ENCODE measurements at regions of chr9 and their contacts with region 1.

Region 1: DNA sequence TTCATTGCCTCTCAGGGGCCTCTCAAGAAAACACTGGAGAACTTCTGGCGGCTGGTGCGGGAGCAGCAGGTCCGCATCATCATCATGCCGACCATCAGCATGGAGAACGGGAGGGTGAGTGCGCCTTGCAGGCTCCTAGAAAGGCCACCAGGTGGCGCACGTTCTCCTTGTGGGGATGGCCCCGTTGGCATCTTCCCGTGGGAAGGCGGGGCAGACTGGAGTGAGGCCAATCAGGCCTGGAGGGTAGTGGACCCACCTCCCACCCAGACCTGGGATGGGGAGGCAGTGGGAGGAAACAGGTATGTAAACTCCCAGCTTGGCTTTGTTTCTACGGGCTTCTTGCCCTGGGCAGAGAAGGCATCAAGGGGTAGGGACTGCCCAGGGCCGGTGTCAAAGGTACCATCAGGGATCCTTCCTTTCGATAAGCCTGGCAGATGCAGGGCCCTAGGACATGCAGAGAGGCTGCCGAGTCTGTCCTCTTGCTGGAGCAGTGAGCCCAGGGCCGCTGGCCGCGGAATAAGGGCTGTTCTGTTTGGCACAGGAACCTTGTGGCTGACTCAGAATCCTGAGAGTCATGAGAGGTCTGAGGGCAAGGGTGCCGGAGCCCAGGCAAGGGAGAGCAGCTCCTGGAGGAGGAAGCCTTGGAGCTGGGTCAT is 18.9 kb upstream of the SPTLC1 start:
- DNase-seq: peak; percentile 78 to 92 (median 87)
- H3K4me3 ChIP-seq: peak overlapping the region; percentile 8
- H3K27ac ChIP-seq: peak overlapping the region; percentile 30 to 36
- H3K4me1 ChIP-seq: peaks cover 8% of the 10 kb centered on the region
- H3K27me3 ChIP-seq: no peaks in the 10 kb centered on the region
- CTCF ChIP-seq: peak; percentile 72 to 88 (median 83)
- EP300 ChIP-seq: no peak
- POLR2A ChIP-seq: no peak

Region 2: GRCh38 chr9:92115071-92115858 is 18.8 kb before region 1 on chr9 and contains the start of gene SPTLC1:
- intact Hi-C with region 1: no loop called
- DNase-seq: peak; percentile 92 to 97 (median 95)
- H3K4me3 ChIP-seq: peak within 1 kb of the TSS; percentile 69
- H3K27ac ChIP-seq: peak within 1 kb of the TSS; percentile 45 to 76
- H3K4me1 ChIP-seq: no peaks in the 10 kb centered on the region
- H3K27me3 ChIP-seq: no peaks in the 10 kb centered on the region
- CTCF ChIP-seq: no peak
- EP300 ChIP-seq: peak; percentile 32
- POLR2A ChIP-seq: peak; percentile 82
- total RNA-seq, gene SPTLC1: 60.1 to 80.2 (median 72.0) TPM

Region 3: DNA sequence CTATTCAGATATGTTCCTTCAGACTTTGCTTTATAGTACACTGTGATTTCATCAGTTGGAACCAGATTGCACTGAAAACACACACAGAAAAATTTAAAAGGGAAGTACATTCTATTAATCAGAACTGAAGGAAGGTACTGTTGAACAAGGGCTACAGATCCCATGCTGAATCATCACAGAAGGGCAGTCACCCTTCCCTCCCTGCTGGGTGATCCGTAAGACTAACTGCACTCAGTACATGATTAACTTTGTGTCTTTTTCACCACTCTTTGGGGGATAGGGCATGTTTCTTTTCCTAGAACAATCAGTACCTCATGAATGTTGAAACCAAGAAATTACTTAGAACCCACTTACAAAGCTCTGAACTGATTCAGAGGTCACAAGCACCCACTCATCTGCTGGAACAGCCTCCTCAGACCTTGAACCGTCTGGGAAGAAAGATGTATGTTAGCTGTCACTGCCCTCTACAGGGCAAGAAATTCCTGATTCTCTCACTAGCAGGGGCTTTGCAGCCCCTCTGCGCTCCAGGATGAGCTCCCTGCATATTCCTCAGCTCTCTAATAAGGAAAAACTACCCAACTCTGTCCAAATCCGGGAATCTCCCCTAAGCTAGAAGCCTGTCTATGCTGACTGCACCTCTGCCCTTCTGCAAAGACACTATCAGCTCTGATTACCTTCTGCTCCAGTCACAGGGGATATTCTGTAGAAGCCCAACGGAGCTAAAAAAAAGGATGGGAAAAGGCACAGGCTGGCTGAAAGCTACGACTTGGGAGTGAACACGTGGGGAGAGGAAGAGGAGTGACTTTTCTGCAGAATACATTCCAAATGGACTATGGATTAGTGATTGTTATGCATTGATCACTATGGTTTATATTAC is 108.4 kb after region 1 on chr9:
- intact Hi-C with region 1: loop called in 1 of 4 experiments (anchors 10 kb)
- DNase-seq: peak in 2 of 5 donors; percentile 26 to 39
- H3K4me3 ChIP-seq: no peak overlapping the region
- H3K27ac ChIP-seq: no peak overlapping the region
- H3K4me1 ChIP-seq: no peaks in the 10 kb centered on the region
- H3K27me3 ChIP-seq: no peaks in the 10 kb centered on the region
- CTCF ChIP-seq: peak in 2 of 3 donors; percentile 40 to 63
- EP300 ChIP-seq: no peak
- POLR2A ChIP-seq: no peak

Region 4: DNA sequence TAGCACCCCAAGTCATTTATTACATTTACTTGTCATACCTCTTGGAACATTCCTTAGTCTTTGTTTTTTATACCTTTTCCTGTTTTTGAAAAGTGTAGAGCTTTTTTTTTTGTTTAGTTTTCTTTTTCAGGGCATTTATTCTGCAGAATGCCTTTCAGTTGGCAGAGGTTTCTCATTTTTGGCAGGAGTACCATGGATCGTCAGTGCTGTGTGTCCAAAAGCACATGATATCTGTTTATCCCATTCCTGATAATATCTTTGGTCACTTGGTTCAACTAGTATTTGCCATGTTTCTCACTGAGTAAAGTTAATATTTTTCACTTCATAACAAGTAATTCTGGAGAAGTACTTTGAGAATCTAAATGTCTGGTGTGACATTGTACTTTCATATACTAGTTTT is 259.6 kb after region 1 on chr9:
- intact Hi-C with region 1: no loop called
- DNase-seq: no peak
- H3K4me3 ChIP-seq: no peak overlapping the region
- H3K27ac ChIP-seq: peak overlapping the region in 1 of 2 donors; percentile 14
- H3K4me1 ChIP-seq: no peaks in the 10 kb centered on the region
- H3K27me3 ChIP-seq: no peaks in the 10 kb centered on the region
- CTCF ChIP-seq: no peak
- EP300 ChIP-seq: no peak
- POLR2A ChIP-seq: no peak

Region 5: DNA sequence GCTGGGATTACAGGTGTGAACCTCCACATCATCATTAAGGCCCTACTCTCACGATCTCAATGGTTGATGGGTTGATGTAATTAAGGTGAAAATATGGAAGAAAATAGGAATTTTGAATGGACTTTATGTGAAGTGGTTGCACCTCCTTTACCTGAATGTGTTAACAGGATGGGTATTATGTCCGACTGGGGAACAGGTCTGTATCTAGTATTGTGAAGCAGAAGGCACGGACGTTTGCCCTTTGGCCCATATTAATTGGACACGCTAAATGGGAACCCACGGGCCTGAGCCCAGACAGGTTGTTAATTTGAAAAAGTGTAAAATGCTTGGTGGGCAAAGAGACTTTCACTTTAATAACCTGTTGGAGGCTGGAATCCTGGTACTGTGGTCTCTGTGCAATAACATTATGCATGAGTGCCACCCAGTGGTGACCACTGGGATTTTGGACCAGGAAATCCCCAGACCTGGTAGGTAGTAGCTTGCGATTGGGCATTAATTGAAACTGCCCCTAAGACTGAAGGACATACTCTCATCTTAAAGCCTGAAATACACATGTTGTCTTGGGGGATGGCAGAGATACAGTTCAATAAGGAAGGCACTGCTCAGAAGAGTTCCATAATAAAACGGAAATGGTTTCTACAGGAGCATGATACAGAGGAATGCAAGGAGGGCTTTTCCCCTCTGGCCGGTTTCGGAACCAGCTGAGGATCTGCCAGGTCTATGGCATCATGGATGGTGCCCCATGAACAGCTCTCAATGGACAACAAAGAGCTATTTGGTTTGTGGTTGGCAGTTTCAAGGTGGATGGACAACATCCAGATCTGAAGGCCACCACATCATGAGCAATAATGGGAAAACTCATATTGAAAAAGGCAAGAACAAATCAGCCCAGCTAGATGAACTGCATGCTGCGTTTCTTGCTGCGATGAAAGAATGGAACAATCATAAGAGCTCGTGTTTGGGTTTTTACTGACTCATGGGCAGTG is 656.8 kb after region 1 on chr9:
- intact Hi-C with region 1: loop called in 3 of 4 experiments (anchors 5 to 10 kb)
- DNase-seq: peak; percentile 69 to 86 (median 81)
- H3K4me3 ChIP-seq: no peak overlapping the region
- H3K27ac ChIP-seq: no peak overlapping the region
- H3K4me1 ChIP-seq: no peaks in the 10 kb centered on the region
- H3K27me3 ChIP-seq: no peaks in the 10 kb centered on the region
- CTCF ChIP-seq: peak; percentile 37 to 88 (median 80)
- EP300 ChIP-seq: no peak
- POLR2A ChIP-seq: no peak

Region 6: DNA sequence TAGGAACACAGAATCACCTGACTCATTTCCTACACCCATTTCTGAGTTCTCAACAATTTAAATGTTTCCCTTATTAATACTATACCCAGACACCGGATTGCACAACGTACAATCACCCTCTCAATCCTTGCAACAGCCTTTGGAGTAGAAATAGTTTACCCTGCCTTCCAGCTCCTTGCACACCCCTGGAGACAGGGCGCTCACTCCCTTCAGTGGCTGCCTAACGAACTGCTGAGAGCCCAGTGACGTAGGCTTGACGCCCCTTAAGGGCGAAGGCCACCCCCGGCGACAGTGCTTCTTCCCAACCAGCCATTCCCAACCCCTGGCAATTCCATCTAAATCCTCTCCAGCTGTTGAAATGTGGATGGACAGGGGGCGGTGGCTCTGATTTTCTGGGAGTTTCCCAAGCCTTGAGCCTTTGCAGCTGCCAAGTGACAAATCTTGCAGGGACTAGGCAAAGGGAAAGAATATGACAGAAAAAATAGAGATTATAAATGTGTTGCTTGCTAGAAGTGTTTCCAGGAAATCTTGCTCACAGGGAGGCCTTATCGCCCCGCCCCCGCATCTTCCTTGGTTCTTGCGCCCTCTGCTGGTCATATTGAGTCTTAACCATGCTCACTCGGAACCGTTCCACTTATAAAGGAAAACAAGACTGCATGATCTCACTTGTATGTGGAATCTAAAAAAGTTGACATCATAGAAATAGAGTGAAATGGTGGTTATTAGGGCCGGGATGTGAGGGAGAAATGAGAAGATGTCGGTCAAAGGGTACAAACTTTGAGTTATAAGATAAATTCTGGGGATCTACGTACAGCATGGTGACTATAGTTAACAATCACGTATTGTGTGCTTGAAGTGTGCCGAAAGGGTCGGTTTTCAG is 1828.7 kb after region 1 on chr9:
- intact Hi-C with region 1: no loop called
- DNase-seq: peak; percentile 60 to 80 (median 78)
- H3K4me3 ChIP-seq: no peak overlapping the region
- H3K27ac ChIP-seq: no peak overlapping the region
- H3K4me1 ChIP-seq: peaks cover 3% of the 10 kb centered on the region
- H3K27me3 ChIP-seq: no peaks in the 10 kb centered on the region
- CTCF ChIP-seq: peak; percentile 49 to 62 (median 59)
- EP300 ChIP-seq: no peak
- POLR2A ChIP-seq: no peak